Mammary epithelial cell (primary cell): ENCODE measurements at regions of chr3 and their contacts with region 1.

Region 1: GRCh38 chr3:119937229-119937628 is 155.3 kb downstream of the NR1I2 start:
- DNase-seq: peak; percentile 5
- H3K4me3 ChIP-seq: no peak overlapping the region
- H3K27ac ChIP-seq: no peak overlapping the region
- H3K4me1 ChIP-seq: no peaks in the 10 kb centered on the region
- H3K27me3 ChIP-seq: no peaks in the 10 kb centered on the region
- CTCF ChIP-seq: no peak

Region 2: DNA sequence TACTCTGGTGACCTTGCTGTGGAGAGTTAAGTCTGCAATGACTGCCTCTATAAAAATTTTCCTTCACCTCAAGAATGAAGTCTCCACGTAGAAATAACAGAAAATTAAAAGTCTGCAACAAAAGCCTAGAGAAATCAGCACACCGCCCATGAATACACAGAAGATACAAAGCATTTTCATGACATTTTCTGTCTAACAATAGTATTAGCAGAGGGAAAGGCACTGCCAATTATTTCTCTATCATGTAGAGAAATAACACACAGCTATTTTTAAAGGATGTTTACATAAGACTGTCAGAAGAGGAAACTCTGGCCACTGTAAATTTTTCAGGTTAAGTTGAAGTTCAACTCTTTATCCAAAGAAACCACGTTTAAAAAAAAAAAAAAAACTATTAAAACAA is 76.3 kb after region 1 on chr3:
- CTCF ChIA-PET with region 1: no interaction called
- dilution Hi-C with region 1: no loop called
- in situ Hi-C with region 1: no loop called
- intact Hi-C with region 1: loop called (anchors 5 kb)
- DNase-seq: no peak
- H3K4me3 ChIP-seq: no peak overlapping the region
- H3K27ac ChIP-seq: no peak overlapping the region
- H3K4me1 ChIP-seq: no peaks in the 10 kb centered on the region
- H3K27me3 ChIP-seq: no peaks in the 10 kb centered on the region
- CTCF ChIP-seq: no peak